BJ (cell line): ENCODE measurements at regions of chr1 and their contacts with region 1.

Region 1: GRCh38 chr1:111030590-111030989 is 66.9 kb upstream of the LRIF1 start:
- DNase-seq: no peak
- H3K4me3 ChIP-seq: no peak overlapping the region
- H3K27me3 ChIP-seq: no peaks in the 10 kb centered on the region
- CTCF ChIP-seq: peak; percentile 87

Region 2: DNA sequence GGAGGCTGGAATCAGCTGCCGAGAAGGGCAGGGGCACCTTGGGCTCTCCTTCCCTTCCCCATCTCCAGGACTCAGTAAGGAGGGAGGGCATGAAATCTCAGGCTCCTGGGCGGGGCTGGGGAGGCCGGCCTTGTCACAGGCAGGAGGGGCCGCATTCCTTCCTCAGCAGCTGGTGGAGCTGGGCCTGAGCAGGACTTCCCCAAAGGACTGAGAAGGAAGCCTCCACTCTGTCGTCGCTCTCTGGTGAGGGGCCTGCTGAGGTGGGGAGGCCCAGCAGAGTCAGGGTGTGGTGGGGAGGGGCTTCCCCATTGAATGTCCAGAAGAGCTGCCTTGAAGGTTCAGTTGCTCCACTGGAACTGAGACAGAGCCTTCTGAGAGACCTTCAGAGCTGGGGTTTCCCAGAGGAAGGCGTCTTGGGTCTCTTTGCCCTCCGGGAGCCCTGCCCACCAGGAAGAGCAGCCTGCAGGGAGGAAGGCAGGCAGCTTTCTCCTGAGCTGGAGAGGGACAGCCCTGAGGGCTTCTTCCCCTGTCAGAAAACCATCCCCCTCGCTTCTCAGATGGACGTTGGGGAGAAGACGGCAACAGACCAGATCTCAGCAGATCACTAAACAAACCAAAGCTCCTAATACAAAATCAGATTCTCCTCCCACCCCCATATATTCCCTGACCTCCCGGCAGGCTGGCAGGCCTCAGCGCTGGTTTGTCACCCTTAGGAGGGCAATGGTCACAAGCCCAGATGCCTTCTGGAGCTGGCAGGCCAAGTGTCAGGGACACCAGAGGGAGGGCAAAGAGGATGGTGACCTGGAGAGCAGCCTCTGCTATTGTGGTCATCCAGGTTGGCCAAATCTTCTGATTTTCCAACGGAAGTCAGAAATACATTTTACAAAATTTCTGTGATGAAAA is 522.3 kb before region 1 on chr1:
- CTCF ChIA-PET with region 1: no interaction called
- POLR2A ChIA-PET with region 1: no interaction called
- DNase-seq: no peak
- H3K4me3 ChIP-seq: no peak overlapping the region
- H3K27me3 ChIP-seq: peaks cover 6% of the 10 kb centered on the region
- CTCF ChIP-seq: no peak

Region 3: GRCh38 chr1:111015225-111015624 is 15.4 kb before region 1 on chr1:
- CTCF ChIA-PET with region 1: interaction called, 16 read pairs
- POLR2A ChIA-PET with region 1: no interaction called
- DNase-seq: no peak
- H3K4me3 ChIP-seq: no peak overlapping the region
- H3K27me3 ChIP-seq: no peaks in the 10 kb centered on the region
- CTCF ChIP-seq: no peak

Region 4: DNA sequence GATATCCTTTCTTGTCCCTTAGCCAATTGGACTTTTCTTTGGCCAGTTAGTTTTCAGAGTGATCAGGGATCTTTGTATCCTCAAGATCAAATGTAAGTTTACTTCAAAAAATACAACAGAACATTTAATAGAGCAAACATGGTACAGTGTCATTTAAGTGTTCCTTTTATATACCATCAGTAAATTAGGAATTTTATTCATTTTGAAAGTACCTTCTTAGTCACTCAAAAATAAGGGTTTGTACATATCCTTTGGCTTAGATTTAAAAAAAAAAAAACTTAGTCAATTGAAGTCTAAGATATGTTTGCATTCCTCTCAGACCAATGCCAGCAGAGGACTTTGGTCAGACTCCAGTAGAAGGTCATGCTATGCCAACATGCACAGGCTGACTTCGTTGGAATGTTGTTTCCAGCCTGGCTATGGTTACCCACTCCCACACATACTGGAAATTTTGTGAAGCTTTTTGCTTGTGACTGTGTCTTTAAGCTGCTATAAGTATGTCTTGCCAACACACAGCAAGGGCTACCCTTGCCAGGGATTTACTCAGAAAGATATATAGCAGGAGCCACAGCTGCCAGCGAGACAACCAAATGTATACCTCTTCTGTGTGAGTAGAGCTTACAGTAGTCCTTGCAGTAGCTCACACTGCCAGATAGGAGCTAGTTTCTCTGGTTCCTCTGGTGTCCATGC is 14.6 kb after region 1 on chr1:
- CTCF ChIA-PET with region 1: interaction called, 24 read pairs
- POLR2A ChIA-PET with region 1: no interaction called
- DNase-seq: no peak
- H3K4me3 ChIP-seq: no peak overlapping the region
- H3K27me3 ChIP-seq: no peaks in the 10 kb centered on the region; the same call in 1 of the 2 replicates
- CTCF ChIP-seq: no peak

Region 5: GRCh38 chr1:111214074-111214801 is 183.6 kb after region 1 on chr1:
- CTCF ChIA-PET with region 1: no interaction called
- POLR2A ChIA-PET with region 1: no interaction called
- DNase-seq: no peak
- H3K4me3 ChIP-seq: no peak overlapping the region
- H3K27me3 ChIP-seq: no peaks in the 10 kb centered on the region
- CTCF ChIP-seq: no peak

Region 6: GRCh38 chr1:111334169-111334568 is 303.6 kb after region 1 on chr1:
- CTCF ChIA-PET with region 1: interaction called, 36 read pairs
- POLR2A ChIA-PET with region 1: no interaction called
- DNase-seq: no peak
- H3K4me3 ChIP-seq: no peak overlapping the region
- H3K27me3 ChIP-seq: peaks cover 2% of the 10 kb centered on the region; the same call in 1 of the 2 replicates
- CTCF ChIP-seq: peak; percentile 68

Region 7: DNA sequence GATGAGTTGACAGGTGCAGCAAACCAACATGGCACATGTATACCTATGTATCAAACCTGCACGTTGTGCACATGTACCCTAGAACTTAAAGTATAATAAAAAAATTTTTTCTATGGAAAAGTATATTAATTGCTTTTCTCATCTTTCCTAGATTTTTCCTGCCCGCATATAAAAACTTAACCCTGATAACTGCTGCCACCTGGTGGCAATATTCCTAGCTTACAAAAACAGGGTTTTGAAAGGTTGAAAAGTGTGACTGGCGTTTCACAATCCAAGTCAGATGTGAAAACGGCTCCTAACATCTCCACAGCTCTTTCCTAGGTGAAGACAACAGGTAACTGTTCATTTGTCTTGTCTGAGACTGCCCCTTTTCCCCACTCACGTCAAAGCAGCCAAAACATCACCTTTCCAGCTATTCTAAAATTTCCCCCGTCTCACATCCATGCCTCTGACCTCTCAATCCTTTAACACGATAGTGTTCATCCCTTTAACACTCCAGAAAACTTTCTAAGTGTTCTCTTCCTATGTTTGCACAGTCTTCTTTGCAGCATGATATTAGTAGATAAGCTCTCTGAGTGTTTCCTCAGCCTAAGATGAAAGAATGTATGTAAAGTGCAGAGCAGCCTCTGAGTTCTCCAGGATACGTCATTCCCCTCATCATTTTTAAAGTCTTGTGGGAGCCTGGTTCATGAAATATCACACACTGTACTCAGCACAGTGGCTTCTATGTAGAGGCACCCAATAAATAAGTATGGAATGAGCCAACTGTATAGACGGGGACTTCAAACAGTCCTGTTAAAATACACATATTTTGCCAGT is 369.4 kb after region 1 on chr1:
- CTCF ChIA-PET with region 1: interaction called, 33 read pairs
- POLR2A ChIA-PET with region 1: no interaction called
- DNase-seq: no peak
- H3K4me3 ChIP-seq: no peak overlapping the region
- H3K27me3 ChIP-seq: 0 out of 2 replicates have a peak, but pooled peaks cover 2% of the 10 kb centered on the region
- CTCF ChIP-seq: peak; percentile 68